AG04449 (cell line): ENCODE measurements at regions of chr10 and their contacts with region 1.

Region 1: GRCh38 chr10:95246579-95247051 is 44.2 kb downstream of the PDLIM1 start:
- DNase-seq: no peak
- H3K4me3 ChIP-seq: no peak overlapping the region
- CTCF ChIP-seq: peak; percentile 60

Region 2: GRCh38 chr10:94777886-94778458 is 468.6 kb before region 1 on chr10:
- CTCF ChIA-PET with region 1: no interaction called
- POLR2A ChIA-PET with region 1: no interaction called
- DNase-seq: no peak
- H3K4me3 ChIP-seq: no peak overlapping the region
- CTCF ChIP-seq: no peak

Region 3: DNA sequence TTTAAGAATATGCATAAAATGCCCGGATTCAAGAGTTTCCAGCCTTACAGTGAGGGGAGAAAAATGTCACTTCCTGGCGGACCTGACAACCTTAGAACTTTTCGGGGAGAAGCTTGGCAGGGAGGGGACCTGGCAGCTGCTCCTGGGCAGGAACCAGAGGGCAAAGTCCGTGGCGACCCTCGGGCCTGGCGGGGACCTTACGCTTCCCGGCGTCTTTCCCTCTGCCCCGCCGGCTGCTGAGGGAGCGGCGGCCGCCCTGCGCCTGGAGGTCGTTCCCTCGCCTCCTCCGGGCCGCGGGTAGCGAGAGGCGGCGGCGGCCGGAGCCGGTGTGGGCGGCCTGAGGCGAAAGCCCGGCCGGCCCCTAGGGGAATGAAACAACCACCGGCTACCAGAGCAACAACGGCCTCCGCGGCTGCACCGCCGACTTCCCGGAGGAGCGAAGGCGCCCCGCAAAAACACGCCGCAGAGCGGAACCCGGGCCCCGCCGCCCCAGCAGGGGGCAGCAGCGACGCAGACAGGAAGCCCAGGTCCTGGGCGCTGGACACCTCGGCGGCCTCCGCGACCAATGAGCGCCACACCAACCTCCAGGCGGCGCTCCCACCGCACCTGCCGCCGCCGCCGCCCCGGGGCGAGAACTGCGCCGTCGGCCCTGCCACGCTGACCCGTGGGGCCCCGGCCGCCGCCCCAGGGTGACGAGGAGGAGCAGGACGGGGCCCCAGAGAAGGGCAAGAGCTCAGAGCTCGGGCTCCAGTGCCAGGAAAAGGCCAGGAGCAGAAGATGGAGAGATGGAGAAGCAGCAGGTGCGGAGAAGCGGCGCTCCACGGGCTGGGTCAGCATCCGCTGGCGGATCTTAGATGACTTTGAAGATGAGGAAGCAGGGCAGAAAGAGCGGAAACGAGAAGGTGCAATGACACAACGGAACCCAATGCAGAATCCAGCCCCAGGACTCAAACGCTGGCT is 63.1 kb before region 1 on chr10:
- CTCF ChIA-PET with region 1: interaction called, 274 read pairs
- POLR2A ChIA-PET with region 1: no interaction called
- DNase-seq: no peak
- H3K4me3 ChIP-seq: peak overlapping the region; percentile 63
- CTCF ChIP-seq: peak; percentile 99

Region 4: GRCh38 chr10:95214793-95215192 is 31.8 kb before region 1 on chr10:
- CTCF ChIA-PET with region 1: interaction called, 28 read pairs
- POLR2A ChIA-PET with region 1: no interaction called
- DNase-seq: no peak
- H3K4me3 ChIP-seq: no peak overlapping the region
- CTCF ChIP-seq: no peak

Region 5: GRCh38 chr10:95260397-95260881 is 13.8 kb after region 1 on chr10:
- CTCF ChIA-PET with region 1: interaction called, 25 read pairs
- POLR2A ChIA-PET with region 1: no interaction called
- DNase-seq: peak; percentile 81
- H3K4me3 ChIP-seq: no peak overlapping the region
- CTCF ChIP-seq: no peak

Region 6: GRCh38 chr10:95289003-95289920 is 42.6 kb after region 1 on chr10:
- CTCF ChIA-PET with region 1: interaction called, 13 read pairs
- POLR2A ChIA-PET with region 1: no interaction called
- DNase-seq: no peak
- H3K4me3 ChIP-seq: peak overlapping the region; percentile 89
- CTCF ChIP-seq: no peak

Region 7: DNA sequence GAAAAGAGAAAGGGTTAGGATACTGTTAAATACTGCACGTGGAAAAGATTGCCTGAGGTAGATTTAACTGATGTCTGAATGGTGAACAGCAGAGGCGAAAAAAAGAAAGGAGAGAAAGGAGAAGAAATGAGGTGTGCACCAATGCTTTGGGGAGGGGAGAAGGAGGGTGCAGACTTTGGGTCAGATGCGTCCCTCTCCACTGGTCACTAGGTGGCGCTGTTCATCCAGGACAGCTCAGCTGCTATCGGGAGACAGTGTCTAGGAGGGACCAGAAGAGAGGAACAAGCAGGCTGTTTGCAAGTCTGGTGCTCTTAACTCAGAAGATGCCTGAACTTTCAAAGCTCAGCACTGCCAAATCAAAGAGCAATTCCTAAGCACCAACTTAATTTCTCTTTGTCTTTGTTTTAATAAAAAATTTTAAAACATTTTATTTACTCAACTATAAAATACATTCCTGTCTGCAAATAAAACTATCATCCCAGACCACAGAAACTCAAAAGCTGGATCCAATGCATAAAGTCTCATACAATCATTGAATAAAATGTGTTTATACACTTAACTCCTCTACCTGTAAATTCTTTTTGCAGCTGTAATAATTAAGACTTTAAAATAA is 128.1 kb after region 1 on chr10:
- CTCF ChIA-PET with region 1: interaction called, 18 read pairs
- POLR2A ChIA-PET with region 1: no interaction called
- DNase-seq: no peak
- H3K4me3 ChIP-seq: no peak overlapping the region
- CTCF ChIP-seq: peak; percentile 88